ENCODE measurements at regions of chr2 and their contacts with region 1.

Region 1: DNA sequence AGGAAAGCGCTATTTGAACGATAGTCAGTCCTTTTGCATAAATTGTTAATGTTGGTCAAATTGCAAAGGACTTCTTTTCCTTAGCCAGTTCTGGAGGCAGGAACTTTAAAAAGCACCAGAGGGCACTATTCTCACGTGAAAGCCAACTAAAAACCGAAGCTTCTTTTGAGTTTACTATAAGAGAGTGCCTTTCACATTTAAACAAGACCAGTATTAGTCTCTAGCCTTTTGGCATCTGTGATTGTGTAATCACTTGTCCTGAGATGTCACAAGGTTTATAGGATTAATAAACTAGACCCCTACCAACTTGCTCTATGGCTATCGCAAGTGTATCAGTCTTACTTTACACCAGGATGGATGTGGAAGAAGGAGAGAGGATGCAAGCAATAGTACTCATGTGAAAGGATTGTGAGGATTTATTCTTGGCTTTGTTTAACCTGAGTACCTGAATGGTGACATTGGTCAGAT is 14.4 kb upstream of the STAT4 start:
- DNase-seq: peak in 2 of 4 donors; percentile 65 to 75
- ATAC-seq: peak; percentile 86
- H3K4me3 ChIP-seq: no peak overlapping the region
- H3K27ac ChIP-seq: peak overlapping the region in 1 of 2 donors; percentile 20
- H3K4me1 ChIP-seq: peaks cover 17 to 29% of the 10 kb centered on the region in 2 donors
- H3K27me3 ChIP-seq: no peaks in the 10 kb centered on the region
- CTCF ChIP-seq: peak; percentile 48 to 73

Region 2: DNA sequence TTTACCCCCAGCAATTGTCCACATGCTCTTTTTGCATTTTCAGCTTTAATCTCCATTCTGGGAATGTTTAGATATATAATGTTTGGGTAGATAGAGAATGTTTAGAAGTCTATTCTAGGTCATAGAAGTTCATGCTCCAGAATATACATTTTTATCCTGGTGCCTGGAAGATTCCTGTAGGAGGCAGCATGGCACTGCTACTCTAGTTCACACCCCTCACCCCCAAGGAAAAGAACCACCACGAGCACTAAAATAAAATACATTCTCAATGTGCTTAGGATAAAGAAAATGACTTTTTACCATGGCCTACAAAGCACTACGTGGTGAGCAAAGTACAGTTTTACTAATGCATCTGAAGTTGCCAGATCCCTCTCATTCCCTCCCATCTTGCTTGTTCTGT is 133.8 kb after region 1 on chr2:
- intact Hi-C with region 1: no loop called
- DNase-seq: no peak
- ATAC-seq: no peak
- H3K4me3 ChIP-seq: no peak overlapping the region
- H3K27ac ChIP-seq: no peak overlapping the region
- H3K4me1 ChIP-seq: peaks cover 8 to 21% of the 10 kb centered on the region in 2 donors
- H3K27me3 ChIP-seq: no peaks in the 10 kb centered on the region
- CTCF ChIP-seq: no peak

Region 3: GRCh38 chr2:191521608-191522208 is 356.5 kb after region 1 on chr2:
- intact Hi-C with region 1: loop called in 1 of 2 experiments (anchors 10 kb)
- DNase-seq: peak in 1 of 4 donors; percentile 63
- ATAC-seq: peak; percentile 70
- H3K4me3 ChIP-seq: no peak overlapping the region
- H3K27ac ChIP-seq: no peak overlapping the region
- H3K4me1 ChIP-seq: no peaks in the 10 kb centered on the region
- H3K27me3 ChIP-seq: no peaks in the 10 kb centered on the region
- CTCF ChIP-seq: peak; percentile 54 to 77

Measured in left lung (tissue), 14 donors.